H1 (cell line): ENCODE measurements at regions of chr3 and their contacts with region 1.

Region 1: GRCh38 chr3:36792342-36792741 is 28.0 kb upstream of the DCLK3 start:
- DNase-seq: peak; percentile 29 to 66
- H3K4me3 ChIP-seq: no peak overlapping the region
- H3K27ac ChIP-seq: no peak overlapping the region
- H3K4me1 ChIP-seq: no peaks in the 10 kb centered on the region
- H3K27me3 ChIP-seq: no peaks in the 10 kb centered on the region
- CTCF ChIP-seq: peak; percentile 73 to 91 (median 82)
- EP300 ChIP-seq: no peak
- POLR2A ChIP-seq: no peak
- RAD21 ChIP-seq: peak; percentile 90 to 95

Region 2: GRCh38 chr3:36763850-36764703 is 28.3 kb before region 1 on chr3 and contains the start of gene DCLK3:
- CTCF ChIA-PET with region 1: interaction called, 11 read pairs
- POLR2A ChIA-PET with region 1: no interaction called
- DNase-seq: peak in 1 of 2 experiments; percentile 67
- H3K4me3 ChIP-seq: peak within 1 kb of the TSS; percentile 54 to 78 (median 62)
- H3K27ac ChIP-seq: no peak within 1 kb of the TSS
- H3K4me1 ChIP-seq: peaks cover 0 to 7% (median 3%) of the 10 kb centered on the region in 4 experiments; a peak in 3 of 7 replicates
- H3K27me3 ChIP-seq: peaks cover 6 to 23% (median 21%) of the 10 kb centered on the region in 4 experiments
- CTCF ChIP-seq: peak in 2 of 3 experiments; percentile 5 to 18; a peak in 2 of 4 replicates
- EP300 ChIP-seq: no peak
- POLR2A ChIP-seq: no peak
- RAD21 ChIP-seq: no peak
- total RNA-seq, gene DCLK3: 0.63 and 0.69 TPM in 2 replicates

Region 3: DNA sequence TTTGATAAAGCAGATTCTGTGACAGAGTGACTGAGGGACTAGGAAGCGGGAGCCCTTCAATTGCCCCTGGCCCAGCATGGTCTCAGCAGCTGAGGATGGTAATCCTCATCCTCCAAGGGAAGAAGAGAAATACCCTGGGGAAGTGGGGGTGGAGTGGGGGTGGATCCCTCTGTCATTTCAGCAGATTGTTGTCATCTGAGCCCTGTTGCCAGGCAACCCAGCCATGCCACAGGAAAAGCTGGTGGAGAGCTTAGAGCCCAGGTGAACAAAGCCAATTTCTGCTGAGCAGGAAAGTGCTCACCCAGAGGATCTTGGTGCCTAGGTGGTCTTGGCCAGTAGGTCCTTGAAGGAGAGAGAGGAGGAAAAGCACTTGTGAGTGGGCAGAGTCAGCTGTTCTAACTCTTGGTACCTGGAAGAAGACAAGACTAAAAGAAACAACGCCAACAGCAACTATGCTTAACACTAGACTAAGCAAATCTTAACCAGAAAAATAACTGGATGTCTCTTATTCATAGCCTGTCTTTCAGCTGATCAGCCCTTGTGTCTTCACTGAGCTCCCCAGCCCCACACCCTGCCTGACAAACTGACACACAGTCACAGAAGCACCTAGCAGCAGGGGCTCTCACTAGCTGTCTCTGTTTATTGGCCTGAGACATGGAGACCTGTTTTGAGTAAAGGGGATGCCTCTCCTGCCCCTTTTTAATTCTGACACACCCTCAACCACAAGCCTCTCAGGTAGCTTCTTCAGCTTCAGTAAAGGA is 12.1 kb after region 1 on chr3:
- CTCF ChIA-PET with region 1: interaction called, 106 read pairs
- POLR2A ChIA-PET with region 1: no interaction called
- DNase-seq: no peak
- H3K4me3 ChIP-seq: no peak overlapping the region
- H3K27ac ChIP-seq: no peak overlapping the region
- H3K4me1 ChIP-seq: peaks cover 0 to 5% (median 2%) of the 10 kb centered on the region in 4 experiments; a peak in 3 of 7 replicates
- H3K27me3 ChIP-seq: no peaks in the 10 kb centered on the region
- CTCF ChIP-seq: no peak
- EP300 ChIP-seq: no peak
- POLR2A ChIP-seq: no peak
- RAD21 ChIP-seq: no peak

Region 4: GRCh38 chr3:36823806-36824205 is 31.5 kb after region 1 on chr3:
- CTCF ChIA-PET with region 1: interaction called, 12 read pairs
- POLR2A ChIA-PET with region 1: no interaction called
- DNase-seq: no peak
- H3K4me3 ChIP-seq: no peak overlapping the region
- H3K27ac ChIP-seq: no peak overlapping the region
- H3K4me1 ChIP-seq: peaks cover 0 to 4% (median 1%) of the 10 kb centered on the region in 4 experiments; a peak in 3 of 7 replicates
- H3K27me3 ChIP-seq: no peaks in the 10 kb centered on the region
- CTCF ChIP-seq: no peak
- EP300 ChIP-seq: no peak
- POLR2A ChIP-seq: no peak
- RAD21 ChIP-seq: no peak